Activated CD8-positive, alpha-beta memory T cell treated with anti-CD3 and anti-CD28 coated beads, Interleukin-2, amount 10 ng/mL, durations not matched to agents 7 days and 5 days (primary cell): ENCODE measurements at regions of chr10 and their contacts with region 1.

Region 1: GRCh38 chr10:110137142-110137545 is 70.3 kb upstream of the MXI1 start:
- DNase-seq: no peak
- ATAC-seq: peak; percentile 72
- H3K4me3 Mint-ChIP-seq: no peak overlapping the region
- H3K27ac Mint-ChIP-seq: peak overlapping the region; percentile 25
- H3K4me1 Mint-ChIP-seq: peaks cover 28% of the 10 kb centered on the region
- H3K27me3 Mint-ChIP-seq: no peaks in the 10 kb centered on the region

Region 2: GRCh38 chr10:109846832-109847231 is 290.3 kb before region 1 on chr10:
- CTCF ChIA-PET with region 1: no interaction called
- DNase-seq: no peak
- ATAC-seq: no peak
- H3K4me3 Mint-ChIP-seq: no peak overlapping the region
- H3K27ac Mint-ChIP-seq: no peak overlapping the region
- H3K4me1 Mint-ChIP-seq: no peaks in the 10 kb centered on the region
- H3K27me3 Mint-ChIP-seq: peaks cover 14% of the 10 kb centered on the region

Region 3: GRCh38 chr10:110147961-110148360 is 10.8 kb after region 1 on chr10:
- CTCF ChIA-PET with region 1: interaction called, 11 read pairs
- DNase-seq: no peak
- ATAC-seq: peak; percentile 35
- H3K4me3 Mint-ChIP-seq: no peak overlapping the region
- H3K27ac Mint-ChIP-seq: no peak overlapping the region
- H3K4me1 Mint-ChIP-seq: peaks cover 9% of the 10 kb centered on the region
- H3K27me3 Mint-ChIP-seq: peaks cover 83% of the 10 kb centered on the region

Region 4: GRCh38 chr10:110158051-110159005 is 21.2 kb after region 1 on chr10:
- CTCF ChIA-PET with region 1: interaction called, 12 read pairs
- DNase-seq: peak; percentile 35
- ATAC-seq: no peak
- H3K4me3 Mint-ChIP-seq: no peak overlapping the region
- H3K27ac Mint-ChIP-seq: peak overlapping the region; percentile 5
- H3K4me1 Mint-ChIP-seq: peaks cover 44% of the 10 kb centered on the region
- H3K27me3 Mint-ChIP-seq: peaks cover 83% of the 10 kb centered on the region

Region 5: GRCh38 chr10:110168601-110169481 is 31.7 kb after region 1 on chr10:
- CTCF ChIA-PET with region 1: interaction called, 10 read pairs
- DNase-seq: peak; percentile 39
- ATAC-seq: peak; percentile 58
- H3K4me3 Mint-ChIP-seq: no peak overlapping the region
- H3K27ac Mint-ChIP-seq: no peak overlapping the region
- H3K4me1 Mint-ChIP-seq: peaks cover 18% of the 10 kb centered on the region
- H3K27me3 Mint-ChIP-seq: peaks cover 88% of the 10 kb centered on the region

Region 6: DNA sequence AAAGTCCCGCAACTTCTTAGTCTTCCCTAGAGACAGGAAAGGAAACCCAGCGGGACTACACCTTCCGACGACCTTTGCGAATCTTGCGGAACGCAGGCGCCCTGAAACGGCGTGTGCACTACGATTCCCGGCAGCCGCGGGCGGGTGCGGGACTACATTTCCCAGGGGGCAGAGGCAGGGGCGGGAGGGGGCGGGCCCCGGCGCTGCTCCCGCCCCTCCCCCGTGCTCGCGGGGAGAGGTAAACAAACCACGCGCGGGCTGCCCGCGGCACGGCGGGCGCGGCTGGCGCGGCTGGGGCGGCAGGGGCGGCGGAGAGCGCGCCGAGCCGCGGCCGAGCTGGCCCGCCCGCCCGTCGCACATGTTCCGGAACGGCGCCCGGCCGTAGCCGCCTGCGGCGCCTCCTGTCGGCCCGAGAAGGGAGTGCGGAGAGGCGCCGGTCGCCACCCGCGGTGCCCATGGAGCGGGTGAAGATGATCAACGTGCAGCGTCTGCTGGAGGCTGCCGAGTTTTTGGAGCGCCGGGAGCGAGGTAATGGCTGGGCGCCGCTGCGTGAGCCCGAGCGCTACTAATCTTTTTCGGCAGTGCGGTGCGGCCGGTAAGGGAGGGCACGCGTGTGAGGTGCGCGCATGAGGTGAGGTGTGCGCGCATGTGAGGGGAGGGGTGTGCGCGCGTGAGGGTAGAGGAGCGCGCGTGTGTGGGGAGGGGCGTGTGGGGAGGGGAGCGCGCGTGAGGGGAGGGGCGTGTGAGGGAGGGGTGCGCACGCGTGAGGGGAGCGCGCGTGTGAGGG is 88.8 kb after region 1 on chr10:
- CTCF ChIA-PET with region 1: interaction called, 28 read pairs
- DNase-seq: peak; percentile 91
- ATAC-seq: peak; percentile 78
- H3K4me3 Mint-ChIP-seq: peak overlapping the region; percentile 90
- H3K27ac Mint-ChIP-seq: peak overlapping the region; percentile 91
- H3K4me1 Mint-ChIP-seq: peaks cover 38% of the 10 kb centered on the region
- H3K27me3 Mint-ChIP-seq: peaks cover 7% of the 10 kb centered on the region

Region 7: GRCh38 chr10:110279407-110279986 is 142.4 kb after region 1 on chr10:
- CTCF ChIA-PET with region 1: interaction called, 48 read pairs
- DNase-seq: peak; percentile 63
- ATAC-seq: peak; percentile 67
- H3K4me3 Mint-ChIP-seq: no peak overlapping the region
- H3K27ac Mint-ChIP-seq: no peak overlapping the region
- H3K4me1 Mint-ChIP-seq: peaks cover 9% of the 10 kb centered on the region
- H3K27me3 Mint-ChIP-seq: peaks cover 21% of the 10 kb centered on the region